ENCODE measurements at regions of chr7 and their contacts with region 1.

Region 1: GRCh38 chr7:42856607-42856994 is 55.3 kb downstream of the C7orf25 start:
- DNase-seq: no peak
- H3K4me3 ChIP-seq: peak overlapping the region; percentile 58
- CTCF ChIP-seq: no peak

Region 2: GRCh38 chr7:42876182-42877068 is 19.8 kb after region 1 on chr7:
- CTCF ChIA-PET with region 1: interaction called, 10 read pairs
- POLR2A ChIA-PET with region 1: no interaction called
- DNase-seq: no peak
- H3K4me3 ChIP-seq: no peak overlapping the region
- CTCF ChIP-seq: peak; percentile 72

Region 3: DNA sequence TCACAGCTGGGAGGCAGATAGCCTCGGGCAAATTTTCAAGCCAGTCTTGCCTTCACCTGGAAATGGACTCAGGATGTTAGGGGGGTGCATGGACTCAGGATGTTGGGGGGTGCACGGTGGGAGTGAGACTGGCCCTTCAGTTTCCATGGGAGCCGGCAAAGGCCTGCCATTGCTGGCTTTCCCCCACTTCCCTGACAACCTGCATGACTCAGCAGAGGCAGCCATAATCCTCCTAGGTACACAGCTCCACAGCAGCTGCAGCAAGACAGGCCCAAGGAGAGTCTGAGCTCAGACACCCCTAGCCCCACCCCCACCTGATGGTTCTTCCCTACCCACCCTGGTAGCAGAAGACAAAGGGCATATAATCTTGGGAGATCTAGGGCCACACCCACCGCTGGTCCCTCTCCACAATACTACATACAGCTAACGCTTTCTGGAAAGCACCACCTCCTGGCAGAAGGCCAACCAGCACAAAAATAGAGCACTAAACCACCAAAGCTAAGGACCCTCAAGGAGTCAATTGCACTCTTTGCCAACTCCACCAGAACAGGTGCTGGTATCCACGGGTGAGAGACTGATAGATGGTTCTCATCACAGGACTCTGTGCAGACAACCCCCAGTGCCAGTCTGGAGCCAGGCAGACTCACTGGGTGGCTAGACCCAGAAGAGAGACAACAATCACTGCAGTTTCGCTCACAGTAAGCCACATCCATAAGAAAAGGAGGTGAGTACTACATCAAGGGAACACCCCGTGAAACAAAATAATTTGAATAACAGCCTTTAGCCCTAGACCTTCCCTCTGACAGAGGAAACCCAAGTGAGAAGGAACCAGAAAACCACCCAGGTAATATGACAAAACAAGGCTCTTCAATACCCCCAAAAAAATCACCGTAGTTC is 37.0 kb after region 1 on chr7:
- CTCF ChIA-PET with region 1: no interaction called
- POLR2A ChIA-PET with region 1: no interaction called
- DNase-seq: no peak
- H3K4me3 ChIP-seq: no peak overlapping the region
- CTCF ChIP-seq: no peak